Sciatic nerve (tissue), 2 donors: ENCODE measurements at regions of chr11 and their contacts with region 1.

Region 1: GRCh38 chr11:66734215-66734614 is 5.2 kb upstream of the SPTBN2 start:
- DNase-seq: no peak
- ATAC-seq: no peak

Region 2: GRCh38 chr11:66996609-66997405 is 262.6 kb after region 1 on chr11:
- intact Hi-C with region 1: no loop called
- DNase-seq: no peak
- ATAC-seq: no peak

Region 3: DNA sequence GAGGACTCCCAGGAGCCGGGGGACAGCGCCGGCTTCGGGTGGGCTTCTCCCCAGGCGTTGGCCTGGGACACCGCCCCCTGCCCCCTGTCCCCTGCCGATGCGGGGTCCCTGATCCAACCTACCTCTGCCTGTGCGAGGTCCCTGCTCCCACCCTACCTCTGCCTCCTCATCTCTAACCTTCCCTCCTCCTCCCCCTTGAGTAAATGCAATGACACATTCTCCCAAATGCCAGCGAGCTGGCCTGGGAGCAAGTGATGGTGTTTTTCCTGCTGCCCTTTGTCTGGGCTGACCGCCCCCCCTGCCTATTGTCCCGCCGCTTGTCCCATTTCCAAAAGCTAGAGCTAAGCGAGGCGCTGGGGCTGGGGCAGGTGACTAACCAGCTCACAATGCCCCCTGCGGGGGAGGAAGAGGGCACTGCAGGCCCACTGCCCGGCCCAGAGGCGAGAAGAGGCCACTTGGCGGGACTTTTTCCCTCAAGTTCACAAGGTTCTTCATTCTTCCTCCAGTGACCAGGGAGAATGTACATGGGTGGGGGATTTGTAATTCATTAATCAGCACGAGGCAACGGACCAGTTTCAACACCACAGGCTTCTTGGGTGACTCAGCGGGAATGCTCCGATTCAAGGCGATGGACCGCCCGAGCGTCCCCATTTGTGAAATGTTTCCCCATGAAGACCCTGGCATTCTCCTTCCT is 639.9 kb after region 1 on chr11:
- intact Hi-C with region 1: loop called (anchors 5 kb)
- DNase-seq: peak; percentile 84
- ATAC-seq: peak; percentile 64